HEK293 (cell line): ENCODE measurements at regions of chr22 and their contacts with region 1.

Region 1: GRCh38 chr22:31272522-31273446 is 19.5 kb downstream of the PIK3IP1 start:
- H3K4me3 ChIP-seq: no peak overlapping the region
- H3K27ac ChIP-seq: no peak overlapping the region
- H3K4me1 ChIP-seq: no peaks in the 10 kb centered on the region
- CTCF ChIP-seq: no peak

Region 2: DNA sequence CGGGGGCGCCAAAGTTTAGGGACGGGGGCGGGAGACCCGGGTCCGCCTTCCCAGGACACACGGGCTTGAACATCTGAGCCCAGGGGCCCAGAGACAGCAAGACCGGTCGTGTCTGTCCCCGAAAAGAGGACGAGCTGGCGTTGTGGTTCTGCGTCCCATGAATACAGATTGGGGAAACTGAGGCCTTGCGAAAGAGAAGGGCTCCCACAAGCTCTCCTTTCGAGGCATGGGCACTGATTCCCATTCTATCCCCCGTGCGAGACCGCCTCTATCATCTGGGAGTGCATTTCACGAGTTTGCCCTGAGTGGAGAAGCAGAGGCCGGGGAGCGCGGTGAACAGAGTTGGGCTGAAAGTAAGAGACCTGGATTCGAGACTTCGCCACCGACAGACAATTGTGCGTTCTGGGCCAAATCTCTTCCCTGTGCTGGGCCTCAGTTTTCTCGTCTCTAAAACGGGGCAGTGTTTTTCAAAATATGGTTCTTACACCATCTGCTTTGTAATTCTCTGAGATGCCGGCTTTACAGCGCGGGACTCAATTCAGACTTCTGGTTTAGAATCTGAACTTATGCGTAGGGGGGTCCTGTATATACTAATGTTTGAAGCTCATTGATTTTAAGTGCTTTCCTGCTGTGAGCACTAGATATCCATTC is 112.3 kb before region 1 on chr22:
- CTCF ChIA-PET with region 1: interaction called, 16 read pairs
- POLR2A ChIA-PET with region 1: no interaction called
- H3K4me3 ChIP-seq: peak overlapping the region; percentile 89
- H3K27ac ChIP-seq: 0 out of 2 replicates have a peak overlapping the region, but pooled peaks have one; percentile 61
- H3K4me1 ChIP-seq: peaks cover 7% of the 10 kb centered on the region
- CTCF ChIP-seq: no peak

Region 3: DNA sequence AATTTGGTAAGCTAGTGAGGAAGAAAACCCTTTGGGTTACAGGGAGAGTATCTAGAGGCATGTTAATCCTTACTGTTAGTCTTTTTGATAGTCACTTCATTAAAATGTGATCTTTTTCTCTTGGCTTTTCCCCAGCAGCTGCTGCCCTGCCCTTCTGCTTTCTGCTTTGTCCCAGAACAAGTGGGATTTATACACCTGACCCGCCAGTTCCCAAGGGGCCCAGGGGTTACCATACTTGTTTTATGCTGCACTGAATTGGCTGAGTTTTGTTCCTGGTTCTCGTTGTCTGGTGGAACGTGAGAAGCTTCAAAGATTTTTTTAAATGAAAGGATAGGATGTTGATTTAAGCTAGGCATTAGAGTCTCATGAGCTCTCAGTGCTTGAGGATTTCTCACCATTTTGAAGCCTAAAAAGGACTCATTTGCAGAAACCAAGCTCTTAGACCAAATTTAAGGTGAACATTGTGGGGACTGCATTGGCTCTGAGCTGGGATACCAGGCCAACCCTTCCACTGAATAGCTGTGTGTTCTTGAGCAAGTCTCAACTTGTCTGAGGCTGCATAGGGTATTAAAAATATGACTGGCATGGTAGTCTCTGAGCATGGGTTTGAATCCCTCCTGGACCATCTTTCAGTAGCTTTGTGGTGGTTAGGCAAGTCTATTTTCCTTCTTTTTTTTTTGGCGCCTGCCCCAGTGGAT is 54.1 kb before region 1 on chr22:
- CTCF ChIA-PET with region 1: interaction called, 117 read pairs
- POLR2A ChIA-PET with region 1: no interaction called
- H3K4me3 ChIP-seq: no peak overlapping the region
- H3K27ac ChIP-seq: peak overlapping the region; percentile 65
- H3K4me1 ChIP-seq: peaks cover 31% of the 10 kb centered on the region
- CTCF ChIP-seq: no peak

Region 4: DNA sequence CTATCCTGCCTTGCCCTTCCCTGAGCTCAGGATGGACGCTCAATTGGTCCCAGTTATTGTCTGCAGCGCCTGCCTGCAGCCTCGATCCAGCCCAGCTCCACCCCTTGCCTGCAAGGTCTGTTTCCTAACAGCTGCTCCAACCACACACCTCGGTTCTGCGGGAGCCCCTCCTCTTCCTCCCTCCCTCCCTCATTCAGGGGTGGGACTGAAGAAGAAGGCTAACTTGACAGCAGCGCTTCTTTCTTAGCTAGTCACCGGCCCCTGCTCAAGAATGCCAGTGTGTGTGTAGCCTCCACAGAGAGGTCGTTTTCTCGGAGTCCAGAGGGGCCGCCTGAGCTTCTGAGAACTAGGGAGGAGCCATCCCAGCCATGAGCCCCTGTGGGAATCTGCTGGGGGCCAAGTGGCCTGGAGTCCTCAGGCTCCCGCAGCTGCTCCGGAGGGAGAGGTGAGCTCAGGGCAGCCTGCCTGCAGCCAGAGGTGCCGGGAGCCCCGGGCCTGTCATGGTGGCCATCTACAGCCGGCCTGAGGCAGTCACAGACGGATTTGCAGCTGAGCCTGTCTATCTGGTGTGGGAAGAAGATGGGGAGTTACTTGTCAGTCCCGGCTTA is 24.5 kb before region 1 on chr22:
- CTCF ChIA-PET with region 1: interaction called, 46 read pairs
- POLR2A ChIA-PET with region 1: interaction called, 4 read pairs
- H3K4me3 ChIP-seq: no peak overlapping the region
- H3K27ac ChIP-seq: peak overlapping the region; percentile 21; the same call in 1 of the 2 replicates
- H3K4me1 ChIP-seq: peaks cover 2% of the 10 kb centered on the region; the same call in 1 of the 2 replicates
- CTCF ChIP-seq: no peak

Region 5: DNA sequence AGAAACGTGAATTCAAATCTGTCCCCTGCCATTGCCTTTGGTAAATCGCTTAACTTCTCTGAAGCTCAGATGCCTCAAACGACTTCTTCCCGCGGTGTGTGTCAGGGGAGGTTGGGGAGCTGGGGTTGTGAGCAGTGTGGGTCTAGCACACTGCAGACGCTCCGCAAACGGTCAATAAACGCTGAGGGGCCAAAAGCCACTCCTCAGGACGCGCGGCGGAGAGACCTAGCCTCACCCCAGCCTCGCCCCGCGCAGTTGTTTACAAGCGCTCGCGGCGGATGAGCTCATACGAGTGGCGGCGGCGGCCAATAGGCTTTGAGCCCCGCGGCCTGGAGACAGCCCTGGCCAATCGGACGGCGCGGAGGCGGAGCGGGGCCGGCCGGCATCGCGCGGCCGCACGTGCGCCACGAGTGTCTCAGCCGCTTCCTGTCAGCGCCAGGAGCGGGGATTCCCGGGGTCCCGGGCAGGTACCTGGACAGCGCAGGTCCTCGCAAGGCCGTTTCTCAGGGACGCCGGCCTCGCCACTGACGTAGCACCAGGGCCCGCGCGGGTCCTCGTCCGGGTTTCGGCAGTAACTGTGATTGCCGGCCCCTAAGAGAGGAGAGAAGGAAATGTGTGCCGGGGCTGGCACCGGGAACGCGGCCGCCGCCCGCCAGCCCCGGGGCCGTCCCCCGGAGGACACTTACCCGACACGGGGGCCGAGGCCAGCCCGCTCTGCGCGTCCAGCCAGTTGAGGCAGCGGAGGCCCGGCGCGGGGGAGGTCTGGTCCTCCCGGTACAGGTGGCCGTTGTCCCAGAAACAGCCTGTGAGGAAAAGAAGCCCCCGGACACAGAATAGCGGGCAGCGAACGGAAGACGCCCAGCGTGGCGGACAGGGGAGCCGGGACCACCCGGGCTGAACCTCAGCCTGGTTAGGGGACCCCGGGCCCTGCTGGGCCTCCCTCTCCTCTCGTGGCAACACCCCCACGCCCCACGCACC is 18.0 kb after region 1 on chr22:
- CTCF ChIA-PET with region 1: interaction called, 22 read pairs
- POLR2A ChIA-PET with region 1: interaction called, 7 read pairs
- H3K4me3 ChIP-seq: peak overlapping the region; percentile 50
- H3K27ac ChIP-seq: peak overlapping the region; percentile 54; the same call in 1 of the 2 replicates
- H3K4me1 ChIP-seq: peaks cover 11% of the 10 kb centered on the region; the same call in 1 of the 2 replicates
- CTCF ChIP-seq: no peak